ENCODE measurements at regions of chr4 and their contacts with region 1.

Region 1: DNA sequence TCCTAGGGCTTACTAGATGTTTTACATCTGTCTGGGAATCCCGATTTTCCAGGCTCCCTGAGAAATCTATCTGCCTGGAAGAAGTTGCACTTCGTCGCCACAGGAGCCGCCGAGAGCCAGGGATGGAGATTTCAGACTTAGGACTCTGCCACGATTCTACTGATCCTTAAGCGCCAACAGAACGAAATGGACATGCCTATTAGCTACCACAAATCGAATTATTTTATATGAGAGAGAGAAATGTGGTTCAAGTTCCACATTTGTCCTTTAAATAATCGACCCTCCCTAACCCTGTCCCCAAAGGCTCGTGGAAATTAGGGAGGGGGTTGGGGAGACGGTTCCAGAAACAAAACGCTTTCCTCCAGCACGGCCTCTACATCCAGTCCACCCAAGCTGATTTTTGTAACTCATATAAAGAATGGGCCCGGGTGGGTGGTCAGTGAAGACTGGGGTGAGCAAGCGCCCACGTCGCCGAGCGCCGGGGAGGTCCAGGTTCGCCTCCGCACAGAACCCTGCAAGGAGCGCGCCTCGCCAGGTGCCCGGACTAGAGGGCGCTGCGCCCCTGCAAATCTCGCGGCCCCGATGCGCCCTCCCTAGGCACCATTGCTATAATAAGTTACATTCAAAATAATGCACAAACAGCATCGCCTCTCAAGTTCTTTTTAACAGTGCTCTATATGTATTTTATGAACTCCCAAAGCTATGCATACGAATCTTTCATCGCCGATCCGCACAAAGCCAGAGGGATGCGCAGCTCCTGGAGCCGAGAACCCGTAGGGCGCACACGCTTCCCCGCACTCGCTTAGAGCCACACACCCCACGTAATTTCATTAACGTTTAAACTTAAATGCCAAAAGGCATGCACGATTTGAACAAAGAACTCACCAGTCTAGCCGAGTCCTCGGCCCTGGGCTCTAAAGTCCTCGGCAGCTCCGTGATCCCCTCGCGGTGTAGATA is 2.1 kb upstream of the FAT1 start:
- DNase-seq: peak; percentile 75 to 92 (median 89)
- ATAC-seq: peak; percentile 77 to 82
- H3K4me3 ChIP-seq: peak overlapping the region; percentile 72
- H3K27ac ChIP-seq: peak overlapping the region; percentile 60
- H3K4me1 ChIP-seq: no peaks in the 10 kb centered on the region
- H3K27me3 ChIP-seq: no peaks in the 10 kb centered on the region

Region 2: GRCh38 chr4:186606593-186606992 is 119.2 kb before region 1 on chr4:
- intact Hi-C with region 1: no loop called
- DNase-seq: no peak
- ATAC-seq: no peak
- H3K4me3 ChIP-seq: no peak overlapping the region
- H3K27ac ChIP-seq: no peak overlapping the region
- H3K4me1 ChIP-seq: no peaks in the 10 kb centered on the region
- H3K27me3 ChIP-seq: no peaks in the 10 kb centered on the region

Region 3: DNA sequence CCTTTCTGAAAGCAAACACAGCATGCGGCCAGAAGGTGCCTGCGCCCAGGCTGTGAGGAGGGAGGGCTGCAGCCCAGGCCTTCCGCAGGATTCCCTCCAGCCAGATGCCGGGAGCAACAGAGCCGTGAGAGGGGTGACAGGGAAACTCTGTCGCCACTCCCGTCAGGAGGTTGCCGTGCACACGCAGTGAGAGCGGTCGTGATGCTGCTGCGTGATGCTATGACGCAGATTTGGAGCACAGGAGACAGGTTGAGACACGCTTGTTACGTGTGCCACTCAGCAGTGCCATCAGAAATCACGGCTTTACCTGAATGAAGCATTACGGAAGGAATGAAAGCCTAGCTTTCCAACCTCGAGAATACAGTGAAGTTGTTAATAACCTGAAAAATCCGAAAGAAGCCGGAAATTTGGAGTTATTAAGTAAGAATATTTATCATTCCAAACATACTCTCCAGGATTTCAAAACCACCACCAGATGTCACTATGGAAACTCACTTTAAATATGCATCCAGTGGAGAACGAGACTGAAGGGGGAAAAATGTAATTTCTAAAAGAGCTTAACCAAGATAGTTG is 56.5 kb before region 1 on chr4:
- intact Hi-C with region 1: loop called in 2 of 4 experiments (anchors 2 to 10 kb)
- DNase-seq: no peak
- ATAC-seq: peak; percentile 41 to 71
- H3K4me3 ChIP-seq: peak overlapping the region; percentile 14
- H3K27ac ChIP-seq: peak overlapping the region; percentile 0
- H3K4me1 ChIP-seq: peaks cover 2% of the 10 kb centered on the region
- H3K27me3 ChIP-seq: no peaks in the 10 kb centered on the region

Region 4: GRCh38 chr4:186676531-186677161 is 49.1 kb before region 1 on chr4:
- intact Hi-C with region 1: loop called in 2 of 4 experiments (anchors 2 to 5 kb)
- DNase-seq: no peak
- ATAC-seq: peak; percentile 86 to 88
- H3K4me3 ChIP-seq: no peak overlapping the region
- H3K27ac ChIP-seq: peak overlapping the region; percentile 64
- H3K4me1 ChIP-seq: peaks cover 2% of the 10 kb centered on the region
- H3K27me3 ChIP-seq: no peaks in the 10 kb centered on the region

Region 5: DNA sequence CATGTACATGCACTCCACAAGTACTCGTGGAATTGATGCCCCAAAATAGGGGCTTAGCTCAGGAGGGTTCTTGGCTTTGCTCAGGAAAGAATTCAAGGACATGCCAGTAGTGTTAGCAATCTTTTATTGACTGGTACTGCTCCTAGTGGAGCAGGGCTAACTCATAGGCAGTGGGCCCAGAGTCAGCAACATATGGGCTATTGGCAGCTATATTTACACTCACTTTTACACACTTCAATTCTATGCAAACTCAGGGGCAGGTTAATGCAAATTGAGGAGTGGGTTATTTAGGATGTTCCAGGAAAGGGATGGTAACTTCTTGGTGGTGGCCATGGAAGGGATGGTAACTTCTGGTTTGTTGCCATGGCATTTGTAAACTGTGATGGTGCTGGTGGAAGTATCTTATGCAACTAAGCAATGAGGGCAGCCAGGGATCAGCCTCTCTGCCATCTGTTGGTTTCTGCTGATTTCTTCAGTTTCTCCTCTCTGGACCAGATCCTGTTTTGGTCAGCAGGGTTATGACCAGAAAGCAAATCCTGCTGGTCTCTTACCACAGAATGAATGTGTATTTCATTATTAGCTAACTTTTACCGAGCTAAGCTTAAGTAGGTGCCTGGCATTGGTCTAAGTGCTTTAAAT is 67.1 kb after region 1 on chr4:
- intact Hi-C with region 1: no loop called
- DNase-seq: no peak
- ATAC-seq: no peak
- H3K4me3 ChIP-seq: no peak overlapping the region
- H3K27ac ChIP-seq: no peak overlapping the region
- H3K4me1 ChIP-seq: no peaks in the 10 kb centered on the region
- H3K27me3 ChIP-seq: no peaks in the 10 kb centered on the region